ENCODE measurements at regions of chr5 and their contacts with region 1.

Region 1: DNA sequence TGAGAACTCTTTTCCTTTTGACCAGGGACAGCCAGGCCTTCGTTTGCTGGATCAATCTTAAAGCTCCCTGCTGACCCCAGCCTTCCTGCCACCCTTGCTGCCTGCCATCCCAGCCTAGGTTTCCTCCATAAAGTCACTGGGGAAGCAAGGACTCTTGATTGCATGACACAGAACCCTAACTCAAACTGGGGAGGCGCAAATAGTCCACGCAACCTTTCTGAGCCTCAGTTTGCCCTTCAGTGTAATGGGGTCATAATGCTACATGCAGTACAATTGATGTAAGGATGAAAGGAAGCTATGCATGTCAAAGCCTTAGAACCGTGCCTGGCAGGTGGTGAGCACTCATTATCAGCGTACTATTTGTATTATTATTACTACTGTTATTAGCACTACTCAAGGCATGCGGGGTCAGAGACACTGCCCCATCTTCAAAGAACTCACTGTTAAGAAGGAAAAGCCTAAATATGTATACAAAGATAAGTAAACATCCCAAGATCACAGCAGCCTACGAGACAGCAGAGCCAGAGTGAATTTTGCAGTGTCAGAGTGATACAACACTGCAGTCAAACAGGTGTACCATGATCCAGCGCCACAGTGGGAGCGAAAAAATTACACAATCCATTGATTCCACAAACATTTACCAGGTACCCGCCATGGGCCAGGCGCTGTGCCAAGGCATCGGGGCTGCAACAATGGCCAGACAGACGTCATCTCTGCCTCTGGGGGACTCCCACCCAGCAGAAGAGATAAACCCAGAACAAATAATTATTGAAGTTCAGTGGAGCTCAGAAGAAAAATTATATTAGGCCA is 16.9 kb upstream of the CPLX2 start:
- DNase-seq: no peak
- ATAC-seq: no peak

Region 2: DNA sequence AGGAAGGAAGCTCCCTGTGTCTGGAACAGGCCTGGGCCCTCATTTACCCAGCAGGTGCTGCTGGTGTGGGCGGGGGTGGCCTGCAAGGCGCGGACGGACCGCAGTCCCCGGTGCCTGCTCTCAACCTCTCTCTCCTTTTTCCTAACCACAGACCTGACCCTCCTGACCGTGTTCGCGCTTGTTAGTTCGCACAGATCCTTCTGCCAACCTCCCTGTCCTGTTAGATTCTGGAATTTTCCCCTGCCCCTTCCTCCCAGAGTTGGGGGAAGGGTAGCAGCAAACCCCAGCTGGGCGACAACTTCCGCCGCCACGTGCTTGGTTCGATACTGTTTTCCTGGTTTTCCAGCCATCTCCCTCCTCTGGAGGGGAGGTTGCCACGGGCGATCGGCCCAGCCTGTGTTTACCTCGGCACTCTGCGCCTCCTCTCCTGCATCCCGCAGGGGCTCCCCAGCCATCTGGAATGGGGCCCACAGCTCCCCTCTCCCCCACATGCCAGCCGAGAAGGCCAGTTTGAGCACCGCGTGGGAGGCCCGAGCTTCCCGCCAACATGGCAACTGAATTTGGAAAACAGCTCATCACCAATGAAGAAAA is 885.1 kb after region 1 on chr5:
- intact Hi-C with region 1: no loop called
- DNase-seq: peak; percentile 47
- ATAC-seq: no peak

Region 3: GRCh38 chr5:176875783-176876505 is 1021.5 kb after region 1 on chr5:
- intact Hi-C with region 1: loop called (anchors 5 kb)
- DNase-seq: no peak
- ATAC-seq: no peak